Esophagus squamous epithelium (tissue), 5 donors: ENCODE measurements at regions of chr9 and their contacts with region 1.

Region 1: DNA sequence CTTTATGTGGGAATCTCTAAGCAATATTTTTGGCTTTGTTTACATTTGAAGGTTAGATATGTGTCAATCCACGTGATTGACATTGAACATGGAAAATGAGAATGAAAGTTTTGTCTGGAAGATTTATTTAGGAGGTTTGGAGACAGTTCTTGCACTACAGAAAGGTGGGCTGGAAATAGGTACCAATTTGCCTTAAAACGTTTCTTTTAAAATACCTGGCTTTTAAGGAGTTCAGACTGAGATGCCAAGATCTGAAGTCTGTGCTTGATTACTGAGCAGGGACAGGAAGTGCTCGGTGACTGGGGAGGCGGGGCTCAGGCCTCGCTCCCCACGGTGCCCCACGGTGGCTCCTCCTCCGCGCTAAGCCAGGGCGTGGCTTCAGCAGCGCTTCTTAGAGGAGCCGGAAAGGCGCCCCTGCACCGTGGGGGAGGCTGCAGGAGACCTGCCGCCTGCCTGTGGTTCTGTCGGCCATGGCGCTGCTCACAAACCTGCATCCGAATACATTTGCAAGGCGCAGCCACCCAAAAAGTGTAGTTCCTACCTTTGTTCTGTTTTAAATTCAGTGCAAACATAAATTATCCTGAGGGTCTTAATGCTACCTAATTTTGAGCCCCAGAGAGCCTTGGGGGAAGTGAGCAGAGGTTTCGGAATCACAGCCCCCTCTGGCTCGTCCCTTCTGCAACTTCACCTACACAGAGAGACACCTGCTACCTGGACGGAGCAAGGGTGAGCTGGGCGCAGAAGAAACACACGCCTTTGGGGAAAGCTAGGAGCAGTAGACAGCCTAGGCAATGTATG is 49.2 kb downstream of the USP20 start:
- DNase-seq: peak; percentile 53
- H3K4me3 ChIP-seq: peak overlapping the region; percentile 23 to 65 (median 50)
- H3K27ac ChIP-seq: peak overlapping the region; percentile 85 to 95 (median 95)
- H3K4me1 ChIP-seq: peaks cover 33 to 72% (median 34%) of the 10 kb centered on the region in 3 donors
- H3K27me3 ChIP-seq: no peaks in the 10 kb centered on the region
- CTCF ChIP-seq: no peak
- POLR2A ChIP-seq: peak in 2 of 4 donors; percentile 49 to 84

Region 2: GRCh38 chr9:130042833-130043653 is 158.6 kb after region 1 on chr9 and contains the start of gene FNBP1:
- intact Hi-C with region 1: loop called (anchors 5 kb)
- DNase-seq: no peak
- H3K4me3 ChIP-seq: peak within 1 kb of the TSS; percentile 85 to 100 (median 98)
- H3K27ac ChIP-seq: peak within 1 kb of the TSS; percentile 94 to 99 (median 98)
- H3K4me1 ChIP-seq: peaks cover 17 to 58% (median 24%) of the 10 kb centered on the region in 3 donors
- H3K27me3 ChIP-seq: no peaks in the 10 kb centered on the region
- CTCF ChIP-seq: no peak
- POLR2A ChIP-seq: peak in 2 of 4 donors; percentile 86 to 95
- total RNA-seq, gene FNBP1: 19.7 to 47.7 (median 26.2) TPM

Region 3: DNA sequence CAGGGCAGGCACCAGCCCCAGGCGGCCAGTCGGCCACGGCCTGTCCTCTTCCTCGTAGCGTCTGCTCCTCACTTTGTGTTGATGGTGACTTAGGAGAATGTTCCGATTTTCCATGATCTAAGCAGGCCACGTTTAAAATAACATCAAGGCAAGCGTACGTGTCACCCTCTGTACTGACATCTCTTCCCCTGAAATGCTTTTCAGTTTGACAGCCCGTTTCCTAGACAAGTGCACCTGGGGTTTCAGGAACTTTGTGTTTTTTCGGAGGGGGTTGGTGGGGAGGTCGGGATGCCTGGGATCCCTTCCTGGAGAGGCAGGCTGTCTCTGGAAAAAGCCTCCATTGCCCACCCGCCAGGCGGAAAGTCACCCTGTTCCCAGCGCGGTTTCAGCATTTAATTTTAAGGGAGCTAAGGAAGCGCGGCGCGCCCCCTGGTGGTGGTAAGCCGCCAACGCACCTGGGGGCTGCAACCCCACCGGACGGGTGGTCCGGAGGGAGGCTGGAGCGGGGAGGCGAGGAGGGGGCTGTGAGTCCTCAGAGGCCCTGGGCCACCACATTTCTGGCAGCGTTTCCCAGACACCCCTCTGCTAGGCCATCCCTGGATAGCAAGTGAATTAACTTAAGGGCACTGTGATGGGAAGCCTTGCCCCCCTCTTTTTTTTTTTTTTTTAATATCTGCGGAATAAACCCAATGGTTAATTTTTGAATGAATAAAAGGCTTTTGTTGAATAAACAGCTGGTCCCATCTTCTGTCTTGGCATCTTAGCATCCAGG is 351.7 kb after region 1 on chr9:
- intact Hi-C with region 1: loop called (anchors 10 kb)
- DNase-seq: no peak
- H3K4me3 ChIP-seq: no peak overlapping the region
- H3K27ac ChIP-seq: peak overlapping the region; percentile 50 to 79 (median 65)
- H3K4me1 ChIP-seq: peaks cover 9 to 46% (median 25%) of the 10 kb centered on the region in 3 donors
- H3K27me3 ChIP-seq: no peaks in the 10 kb centered on the region
- CTCF ChIP-seq: peak; percentile 98 to 100 (median 99)
- POLR2A ChIP-seq: no peak